Activated naive CD4-positive, alpha-beta T cell treated with anti-CD3 and anti-CD28 coated beads for 36 hours (primary cell): ENCODE measurements at regions of chr5 and their contacts with region 1.

Region 1: GRCh38 chr5:6377905-6378765 is at the start of gene MED10:
- DNase-seq: peak; percentile 98
- H3K4me3 Mint-ChIP-seq: peak within 1 kb of the TSS; percentile 99
- H3K27ac Mint-ChIP-seq: peak within 1 kb of the TSS; percentile 96
- H3K4me1 Mint-ChIP-seq: peaks cover 35% of the 10 kb centered on the region
- H3K27me3 Mint-ChIP-seq: no peaks in the 10 kb centered on the region
- total RNA-seq, gene MED10: 49.3 to 50.0 TPM

Region 2: DNA sequence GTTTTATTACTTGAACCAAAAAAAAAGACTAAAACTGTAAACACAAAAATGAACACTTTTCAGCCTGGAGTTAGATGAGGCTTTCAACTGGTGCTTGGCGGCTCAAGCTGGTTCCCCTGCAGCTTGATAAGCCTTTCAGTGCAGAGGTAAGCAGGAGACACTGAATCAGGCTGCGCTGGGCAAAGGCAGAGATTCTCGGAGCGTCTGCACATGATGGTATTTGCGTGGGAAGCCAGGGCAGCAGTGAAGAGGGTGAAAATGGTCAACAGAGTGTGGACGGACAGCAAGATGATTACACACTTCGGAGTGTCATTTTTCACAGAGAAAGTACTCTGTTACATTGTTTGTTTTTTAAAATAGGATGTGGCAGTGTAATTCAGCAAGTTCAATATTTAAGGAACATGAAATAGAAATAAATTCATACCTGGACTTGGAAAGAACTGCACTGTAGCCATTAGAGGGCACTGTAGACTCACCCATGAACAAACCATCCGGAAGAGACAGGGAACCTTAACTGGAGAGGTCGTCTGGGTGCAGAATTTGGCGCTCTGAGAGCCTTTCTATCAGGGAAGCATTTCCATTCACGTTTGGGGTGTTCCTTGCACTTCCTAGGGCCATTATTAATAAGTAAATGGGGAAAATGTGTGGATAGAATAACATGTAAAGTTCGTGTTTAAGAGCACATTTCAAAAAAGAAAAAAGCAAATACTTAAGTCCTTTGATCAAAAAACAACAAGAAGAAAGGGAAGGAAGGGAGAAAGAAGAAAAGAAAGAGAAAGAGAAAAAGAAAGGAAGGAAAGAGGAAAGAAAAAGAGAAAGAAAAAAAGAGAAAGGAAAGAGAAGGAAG is 885.8 kb before region 1 on chr5:
- CTCF ChIA-PET with region 1: no interaction called
- intact Hi-C with region 1: loop called (anchors 5 kb)
- DNase-seq: peak; percentile 58
- H3K4me3 Mint-ChIP-seq: no peak overlapping the region
- H3K27ac Mint-ChIP-seq: no peak overlapping the region
- H3K4me1 Mint-ChIP-seq: peaks cover 10% of the 10 kb centered on the region
- H3K27me3 Mint-ChIP-seq: peaks cover 10% of the 10 kb centered on the region

Region 3: DNA sequence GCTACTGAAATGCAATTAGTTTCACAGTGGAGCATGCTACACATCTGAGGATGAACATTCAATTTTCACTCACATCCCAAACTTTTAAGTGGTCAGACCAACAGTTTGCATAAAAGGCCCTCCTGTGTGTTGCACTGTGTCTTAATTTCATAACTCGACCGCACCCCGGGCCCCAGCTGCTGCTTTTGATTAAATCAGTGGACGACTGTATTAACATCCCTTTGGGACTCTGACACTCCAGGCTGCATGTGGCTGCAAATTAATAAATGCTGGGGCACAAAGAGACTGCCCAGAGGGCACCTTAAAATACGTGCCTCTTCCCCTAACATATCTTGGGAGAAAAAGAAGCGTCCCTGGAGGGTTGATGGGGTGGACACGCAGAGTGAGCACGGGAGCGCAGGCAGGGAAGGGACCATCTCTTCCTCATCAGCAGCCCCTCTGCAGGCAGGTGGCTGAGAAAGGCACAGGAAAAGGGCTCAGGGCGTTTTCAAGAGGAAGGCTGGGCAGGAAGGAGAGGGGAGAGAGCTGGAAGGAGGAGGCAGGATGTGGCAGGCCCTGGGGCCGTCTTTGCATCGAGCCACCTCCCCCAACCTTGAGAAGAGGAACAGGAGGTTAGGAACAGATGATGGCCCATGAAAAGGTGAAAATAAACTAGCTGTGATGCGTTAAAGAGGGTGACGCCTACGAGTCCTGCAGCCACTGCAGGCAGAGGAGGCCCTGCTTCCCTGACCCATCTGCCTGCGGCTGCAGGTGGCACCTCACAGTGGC is 18.4 kb before region 1 on chr5:
- CTCF ChIA-PET with region 1: interaction called, 3 read pairs
- intact Hi-C with region 1: loop called (anchors 1 kb)
- DNase-seq: peak; percentile 45
- H3K4me3 Mint-ChIP-seq: no peak overlapping the region
- H3K27ac Mint-ChIP-seq: peak overlapping the region; percentile 22
- H3K4me1 Mint-ChIP-seq: peaks cover 20% of the 10 kb centered on the region
- H3K27me3 Mint-ChIP-seq: no peaks in the 10 kb centered on the region

Region 4: DNA sequence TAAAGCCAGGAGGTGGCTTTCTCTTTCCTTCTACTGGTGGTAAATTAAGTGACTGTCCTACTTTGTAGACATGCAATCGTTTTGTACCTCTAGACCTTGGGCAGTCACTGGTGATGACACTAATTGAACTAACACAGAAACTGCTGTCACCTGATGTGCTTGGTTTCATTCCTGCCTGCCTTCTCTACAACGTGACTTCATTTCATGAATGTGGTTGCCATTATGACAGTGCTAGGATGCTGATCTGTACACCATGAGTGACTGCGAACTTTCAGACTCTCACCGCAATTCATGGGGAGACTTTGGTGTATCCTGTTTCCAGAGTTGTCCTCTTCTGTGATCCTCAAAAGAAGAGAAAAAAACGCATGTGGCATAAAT is 118.1 kb after region 1 on chr5:
- CTCF ChIA-PET with region 1: no interaction called
- intact Hi-C with region 1: loop called (anchors 1 kb)
- DNase-seq: peak; percentile 37
- H3K4me3 Mint-ChIP-seq: no peak overlapping the region
- H3K27ac Mint-ChIP-seq: no peak overlapping the region
- H3K4me1 Mint-ChIP-seq: peaks cover 10% of the 10 kb centered on the region
- H3K27me3 Mint-ChIP-seq: peaks cover 5% of the 10 kb centered on the region

Region 5: GRCh38 chr5:6712577-6713275 is 334.6 kb after region 1 on chr5:
- CTCF ChIA-PET with region 1: no interaction called
- intact Hi-C with region 1: loop called (anchors 1 kb)
- DNase-seq: peak; percentile 96
- H3K4me3 Mint-ChIP-seq: peak overlapping the region; percentile 83
- H3K27ac Mint-ChIP-seq: peak overlapping the region; percentile 92
- H3K4me1 Mint-ChIP-seq: peaks cover 31% of the 10 kb centered on the region
- H3K27me3 Mint-ChIP-seq: peaks cover 5% of the 10 kb centered on the region

Region 6: GRCh38 chr5:6827526-6828219 is 449.5 kb after region 1 on chr5:
- CTCF ChIA-PET with region 1: no interaction called
- intact Hi-C with region 1: loop called (anchors 1 kb)
- DNase-seq: peak; percentile 59
- H3K4me3 Mint-ChIP-seq: peak overlapping the region; percentile 11
- H3K27ac Mint-ChIP-seq: no peak overlapping the region
- H3K4me1 Mint-ChIP-seq: peaks cover 31% of the 10 kb centered on the region
- H3K27me3 Mint-ChIP-seq: peaks cover 22% of the 10 kb centered on the region